ENCODE measurements at regions of chr7 and their contacts with region 1.

Region 1: GRCh38 chr7:24819916-24820689 is 62.8 kb upstream of the GSDME start:
- DNase-seq: peak; percentile 89
- ATAC-seq: peak; percentile 54
- H3K4me3 Mint-ChIP-seq: peak overlapping the region; percentile 50
- H3K27ac Mint-ChIP-seq: peak overlapping the region; percentile 98
- H3K4me1 Mint-ChIP-seq: peaks cover 45% of the 10 kb centered on the region
- H3K27me3 Mint-ChIP-seq: no peaks in the 10 kb centered on the region

Region 2: GRCh38 chr7:24896031-24896501 is 76.0 kb after region 1 on chr7:
- CTCF ChIA-PET with region 1: interaction called, 11 read pairs
- DNase-seq: peak; percentile 70
- ATAC-seq: peak; percentile 52
- H3K4me3 Mint-ChIP-seq: no peak overlapping the region
- H3K27ac Mint-ChIP-seq: peak overlapping the region; percentile 77
- H3K4me1 Mint-ChIP-seq: peaks cover 61% of the 10 kb centered on the region
- H3K27me3 Mint-ChIP-seq: no peaks in the 10 kb centered on the region

Region 3: GRCh38 chr7:24907311-24907886 is 87.3 kb after region 1 on chr7:
- CTCF ChIA-PET with region 1: interaction called, 11 read pairs
- DNase-seq: peak; percentile 69
- ATAC-seq: peak; percentile 73
- H3K4me3 Mint-ChIP-seq: no peak overlapping the region
- H3K27ac Mint-ChIP-seq: no peak overlapping the region
- H3K4me1 Mint-ChIP-seq: peaks cover 42% of the 10 kb centered on the region
- H3K27me3 Mint-ChIP-seq: no peaks in the 10 kb centered on the region

Region 4: DNA sequence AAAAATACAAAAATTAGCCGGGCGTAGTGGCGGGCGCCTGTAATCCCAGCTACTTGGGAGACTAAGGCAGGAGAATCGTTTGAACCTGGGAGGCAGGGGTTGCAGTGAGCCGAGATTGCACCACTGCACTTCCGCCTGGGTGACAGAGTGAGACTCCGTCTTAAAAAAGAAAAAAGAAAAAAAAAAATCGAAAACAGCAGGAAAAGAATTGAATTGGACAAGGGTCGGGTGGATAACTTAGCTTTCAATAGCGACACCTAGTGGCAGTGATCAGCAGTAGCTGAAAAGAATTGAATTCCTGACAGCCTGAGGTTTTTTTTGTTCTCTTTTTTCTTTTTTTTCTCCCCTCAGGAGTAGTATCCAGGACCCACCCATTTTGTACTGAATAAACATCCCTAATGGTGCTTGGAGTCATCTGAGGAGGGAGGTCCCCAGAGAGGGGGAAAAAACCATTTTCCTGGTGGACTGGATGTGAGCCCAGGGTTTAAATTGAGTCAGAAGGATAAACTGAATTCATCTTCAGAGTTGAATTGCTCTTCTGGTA is 249.9 kb after region 1 on chr7:
- CTCF ChIA-PET with region 1: interaction called, 54 read pairs
- DNase-seq: peak; percentile 66
- ATAC-seq: peak; percentile 79
- H3K4me3 Mint-ChIP-seq: no peak overlapping the region
- H3K27ac Mint-ChIP-seq: no peak overlapping the region
- H3K4me1 Mint-ChIP-seq: peaks cover 16% of the 10 kb centered on the region
- H3K27me3 Mint-ChIP-seq: no peaks in the 10 kb centered on the region